Heart left ventricle (tissue), 16 donors: ENCODE measurements at regions of chr7 and their contacts with region 1.

Region 1: DNA sequence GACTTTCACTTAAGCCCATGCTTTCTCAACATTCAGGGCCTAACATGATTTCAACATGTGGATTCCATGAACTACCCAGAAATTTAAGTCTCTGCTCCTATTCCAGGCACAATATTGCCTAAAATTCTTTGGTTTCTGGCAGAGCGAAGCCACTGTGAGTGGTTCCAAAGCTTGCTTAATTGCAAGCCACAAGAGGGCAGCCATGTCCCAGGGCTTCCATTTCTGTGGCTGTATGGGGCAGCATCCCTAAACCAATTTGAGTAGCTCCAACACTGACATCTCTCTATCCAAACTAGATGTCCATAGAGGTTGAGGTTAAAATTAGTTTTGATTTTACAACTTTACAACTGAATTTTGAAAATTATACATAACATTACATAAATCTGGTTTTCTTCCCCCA is 56.3 kb upstream of the MDFIC start:
- DNase-seq: peak; percentile 39 to 64 (median 41)
- ATAC-seq: peak in 3 of 4 donors; percentile 83 to 88 (median 84)
- H3K4me3 ChIP-seq: no peak overlapping the region
- H3K27ac ChIP-seq: no peak overlapping the region
- H3K4me1 ChIP-seq: no peaks in the 10 kb centered on the region
- H3K27me3 ChIP-seq: no peaks in the 10 kb centered on the region
- CTCF ChIP-seq: peak; percentile 69 to 89 (median 82)
- POLR2A ChIP-seq: no peak

Region 2: GRCh38 chr7:114688443-114689055 is 177.0 kb before region 1 on chr7:
- intact Hi-C with region 1: no loop called
- DNase-seq: no peak
- ATAC-seq: no peak
- H3K4me3 ChIP-seq: no peak overlapping the region
- H3K27ac ChIP-seq: no peak overlapping the region
- H3K4me1 ChIP-seq: no peaks in the 10 kb centered on the region
- H3K27me3 ChIP-seq: no peaks in the 10 kb centered on the region
- CTCF ChIP-seq: no peak
- POLR2A ChIP-seq: no peak

Region 3: GRCh38 chr7:115135769-115136410 is 270.3 kb after region 1 on chr7:
- intact Hi-C with region 1: no loop called
- DNase-seq: no peak
- ATAC-seq: peak in 3 of 4 donors; percentile 53 to 77 (median 66)
- H3K4me3 ChIP-seq: no peak overlapping the region
- H3K27ac ChIP-seq: peak overlapping the region in 2 of 12 donors; percentile 2 to 21
- H3K4me1 ChIP-seq: peaks cover 0 to 18% (median 0%) of the 10 kb centered on the region in 12 donors
- H3K27me3 ChIP-seq: no peaks in the 10 kb centered on the region
- CTCF ChIP-seq: no peak
- POLR2A ChIP-seq: no peak

Region 4: GRCh38 chr7:115217373-115217772 is 351.8 kb after region 1 on chr7:
- intact Hi-C with region 1: loop called in 9 of 10 experiments (anchors 1 to 5 kb)
- DNase-seq: no peak
- ATAC-seq: no peak
- H3K4me3 ChIP-seq: no peak overlapping the region
- H3K27ac ChIP-seq: no peak overlapping the region
- H3K4me1 ChIP-seq: peaks cover 0 to 6% (median 0%) of the 10 kb centered on the region in 12 donors
- H3K27me3 ChIP-seq: no peaks in the 10 kb centered on the region
- CTCF ChIP-seq: peak in 11 of 12 donors; percentile 18 to 59 (median 34)
- POLR2A ChIP-seq: no peak

Region 5: GRCh38 chr7:115475761-115476385 is 610.3 kb after region 1 on chr7:
- intact Hi-C with region 1: loop called (anchors 2 to 10 kb)
- DNase-seq: peak in 1 of 5 donors; percentile 8
- ATAC-seq: peak in 3 of 4 donors; percentile 59 to 71 (median 71)
- H3K4me3 ChIP-seq: no peak overlapping the region
- H3K27ac ChIP-seq: no peak overlapping the region
- H3K4me1 ChIP-seq: peaks cover 0 to 11% (median 0%) of the 10 kb centered on the region in 12 donors
- H3K27me3 ChIP-seq: peaks cover 0 to 26% (median 11%) of the 10 kb centered on the region in 9 donors
- CTCF ChIP-seq: peak in 8 of 12 donors; percentile 12 to 52 (median 33)
- POLR2A ChIP-seq: no peak

Region 6: DNA sequence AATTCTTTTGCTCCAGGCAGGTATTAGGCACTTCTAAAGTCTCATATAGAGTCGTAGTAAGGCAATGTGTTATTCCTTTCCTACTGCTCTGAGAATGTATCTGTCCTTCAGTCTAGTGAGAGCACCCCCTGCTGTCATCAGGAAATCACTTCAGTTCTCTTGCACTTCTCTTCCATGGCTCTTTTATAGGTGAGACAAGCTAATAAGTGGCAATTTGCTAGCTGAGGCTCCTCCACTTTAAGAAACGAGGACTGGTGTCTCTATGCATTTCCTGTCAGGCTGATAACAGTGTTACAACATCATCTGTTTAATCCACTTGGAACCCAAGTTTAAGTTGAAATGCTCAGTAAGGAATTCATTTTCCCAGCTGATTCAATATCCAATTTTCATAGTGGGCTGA is 814.4 kb after region 1 on chr7:
- intact Hi-C with region 1: loop called in 2 of 10 experiments (anchors 5 to 10 kb)
- DNase-seq: no peak
- ATAC-seq: peak in 1 of 4 donors; percentile 39
- H3K4me3 ChIP-seq: no peak overlapping the region
- H3K27ac ChIP-seq: no peak overlapping the region
- H3K4me1 ChIP-seq: no peaks in the 10 kb centered on the region
- H3K27me3 ChIP-seq: no peaks in the 10 kb centered on the region
- CTCF ChIP-seq: peak in 9 of 12 donors; percentile 8 to 46 (median 25)
- POLR2A ChIP-seq: no peak

Region 7: DNA sequence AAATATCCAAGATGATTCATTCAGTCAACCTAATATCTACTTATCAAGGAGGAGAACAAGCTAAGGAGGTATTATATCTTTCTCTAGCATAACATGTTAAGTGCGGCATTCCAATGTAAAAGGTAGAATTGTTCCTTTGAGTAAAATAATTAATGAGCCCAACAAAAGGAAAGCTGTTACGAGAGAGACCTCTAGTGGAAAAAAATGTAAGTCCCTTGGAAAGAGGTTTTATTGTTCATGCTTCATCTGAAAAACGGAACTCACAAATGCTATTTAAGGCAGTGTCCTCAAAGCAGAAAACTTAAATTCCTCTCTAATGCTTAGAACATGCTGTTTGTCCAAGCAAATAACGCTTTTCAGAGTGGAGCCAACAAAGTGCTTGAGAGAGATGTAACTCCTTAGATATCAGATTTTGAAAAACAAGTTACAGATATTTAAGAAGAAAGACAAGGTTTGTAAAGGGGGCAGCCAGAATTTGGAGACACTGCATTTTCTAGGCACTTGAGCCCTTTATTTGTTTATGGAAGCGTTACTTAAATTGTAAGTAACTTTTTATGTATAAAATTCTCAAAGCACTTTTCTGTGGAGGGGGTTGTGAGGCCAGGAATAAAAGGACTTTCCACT is 1045.1 kb after region 1 on chr7:
- intact Hi-C with region 1: loop called in 1 of 10 experiments (anchors 10 kb)
- DNase-seq: no peak
- ATAC-seq: no peak
- H3K4me3 ChIP-seq: no peak overlapping the region
- H3K27ac ChIP-seq: no peak overlapping the region
- H3K4me1 ChIP-seq: peaks cover 0 to 14% (median 0%) of the 10 kb centered on the region in 12 donors
- H3K27me3 ChIP-seq: peaks cover 0 to 8% (median 0%) of the 10 kb centered on the region in 9 donors
- CTCF ChIP-seq: peak; percentile 35 to 70 (median 52)
- POLR2A ChIP-seq: no peak